A673 (cell line): ENCODE measurements at regions of chr10 and their contacts with region 1.

Region 1: DNA sequence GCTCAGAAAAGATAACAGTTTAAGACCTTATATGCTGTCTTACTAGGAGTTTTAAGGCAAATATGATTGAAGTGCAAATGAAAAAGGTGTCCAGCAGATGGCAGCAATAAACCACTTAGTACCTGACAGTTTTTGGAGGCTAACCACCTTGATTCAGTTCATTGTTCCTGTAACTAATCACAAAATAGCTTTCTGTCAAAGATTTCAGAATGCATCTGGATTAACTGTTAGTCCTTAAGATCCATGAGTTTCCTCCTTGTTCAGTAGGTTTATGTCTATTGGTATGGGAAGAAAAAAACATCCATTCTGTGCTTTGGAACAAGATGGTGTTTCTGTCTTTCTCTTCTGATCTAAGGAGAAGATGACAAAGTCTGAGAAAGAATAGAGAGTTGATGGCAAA is 46.6 kb downstream of the CCSER2 start:
- DNase-seq: peak; percentile 55
- H3K4me3 ChIP-seq: no peak overlapping the region
- H3K27ac ChIP-seq: no peak overlapping the region
- H3K4me1 ChIP-seq: no peaks in the 10 kb centered on the region
- H3K27me3 ChIP-seq: no peaks in the 10 kb centered on the region
- CTCF ChIP-seq: peak; percentile 80

Region 2: GRCh38 chr10:84264611-84265141 is 110.3 kb before region 1 on chr10:
- CTCF ChIA-PET with region 1: no interaction called
- POLR2A ChIA-PET with region 1: no interaction called
- intact Hi-C with region 1: loop called (anchors 2 kb)
- DNase-seq: peak; percentile 83
- H3K4me3 ChIP-seq: no peak overlapping the region
- H3K27ac ChIP-seq: no peak overlapping the region
- H3K4me1 ChIP-seq: no peaks in the 10 kb centered on the region
- H3K27me3 ChIP-seq: peaks cover 8% of the 10 kb centered on the region
- CTCF ChIP-seq: peak; percentile 95

Region 3: GRCh38 chr10:84715911-84716310 is 340.9 kb after region 1 on chr10:
- CTCF ChIA-PET with region 1: no interaction called
- POLR2A ChIA-PET with region 1: no interaction called
- intact Hi-C with region 1: loop called (anchors 10 kb)
- DNase-seq: peak; percentile 73
- H3K4me3 ChIP-seq: no peak overlapping the region
- H3K27ac ChIP-seq: no peak overlapping the region
- H3K4me1 ChIP-seq: no peaks in the 10 kb centered on the region
- H3K27me3 ChIP-seq: peaks cover 34% of the 10 kb centered on the region
- CTCF ChIP-seq: peak; percentile 90